Naive thymus-derived CD4-positive, alpha-beta T cell (primary cell): ENCODE measurements at regions of chr18 and their contacts with region 1.

Region 1: GRCh38 chr18:56470406-56471351 is 167.7 kb downstream of the TXNL1 start:
- DNase-seq: no peak
- ATAC-seq: no peak
- H3K4me3 ChIP-seq: no peak overlapping the region
- H3K4me3 Mint-ChIP-seq: no peak overlapping the region
- H3K27ac ChIP-seq: no peak overlapping the region
- H3K27ac Mint-ChIP-seq: no peak overlapping the region
- H3K4me1 ChIP-seq: no peaks in the 10 kb centered on the region
- H3K4me1 Mint-ChIP-seq: no peaks in the 10 kb centered on the region
- H3K27me3 ChIP-seq: no peaks in the 10 kb centered on the region
- H3K27me3 Mint-ChIP-seq: peaks cover 0 to 13% (median 4%) of the 10 kb centered on the region in 5 donors

Region 2: DNA sequence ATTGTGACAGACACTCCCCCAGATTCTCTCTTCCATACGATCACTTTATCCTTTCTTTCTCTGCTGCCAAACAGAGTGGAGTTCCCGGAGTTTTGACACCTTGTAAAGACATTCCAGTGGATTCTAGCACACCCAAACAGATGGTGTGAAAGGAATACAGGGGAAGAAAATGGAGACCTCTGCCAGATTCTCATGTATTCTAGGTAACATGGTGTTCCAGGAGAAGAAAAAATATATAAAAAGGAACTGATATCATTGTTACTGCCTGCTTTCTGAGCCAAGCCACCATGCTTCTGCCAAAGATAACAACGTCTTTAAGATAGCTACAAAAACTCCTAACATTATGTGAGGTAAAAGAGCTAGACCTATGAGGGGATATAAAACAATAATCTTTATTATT is 31.2 kb after region 1 on chr18:
- CTCF ChIA-PET with region 1: no interaction called
- POLR2A ChIA-PET with region 1: no interaction called
- intact Hi-C with region 1: loop called in 1 of 2 experiments (anchors 1 kb)
- DNase-seq: no peak
- ATAC-seq: no peak
- H3K4me3 ChIP-seq: no peak overlapping the region
- H3K4me3 Mint-ChIP-seq: no peak overlapping the region
- H3K27ac ChIP-seq: no peak overlapping the region
- H3K27ac Mint-ChIP-seq: no peak overlapping the region
- H3K4me1 ChIP-seq: no peaks in the 10 kb centered on the region
- H3K4me1 Mint-ChIP-seq: no peaks in the 10 kb centered on the region
- H3K27me3 ChIP-seq: no peaks in the 10 kb centered on the region
- H3K27me3 Mint-ChIP-seq: peaks cover 3 to 13% (median 7%) of the 10 kb centered on the region in 5 donors